Activated CD4-positive, alpha-beta T cell treated with anti-CD3 and anti-CD28 coated beads, Interleukin-2, amount 10 ng/mL, durations not matched to agents 7 days and 5 days (primary cell): ENCODE measurements at regions of chr1 and their contacts with region 1.

Region 1: GRCh38 chr1:185681034-185681633 is 53.1 kb upstream of the HMCN1 start:
- DNase-seq: peak; percentile 52
- H3K4me3 Mint-ChIP-seq: no peak overlapping the region
- H3K27ac Mint-ChIP-seq: no peak overlapping the region
- H3K4me1 Mint-ChIP-seq: peaks cover 25% of the 10 kb centered on the region
- H3K27me3 Mint-ChIP-seq: peaks cover 4% of the 10 kb centered on the region

Region 2: GRCh38 chr1:185360714-185361113 is 320.4 kb before region 1 on chr1:
- CTCF ChIA-PET with region 1: no interaction called
- POLR2A ChIA-PET with region 1: no interaction called
- DNase-seq: no peak
- H3K4me3 Mint-ChIP-seq: no peak overlapping the region
- H3K27ac Mint-ChIP-seq: no peak overlapping the region
- H3K4me1 Mint-ChIP-seq: peaks cover 4% of the 10 kb centered on the region
- H3K27me3 Mint-ChIP-seq: peaks cover 14% of the 10 kb centered on the region

Region 3: DNA sequence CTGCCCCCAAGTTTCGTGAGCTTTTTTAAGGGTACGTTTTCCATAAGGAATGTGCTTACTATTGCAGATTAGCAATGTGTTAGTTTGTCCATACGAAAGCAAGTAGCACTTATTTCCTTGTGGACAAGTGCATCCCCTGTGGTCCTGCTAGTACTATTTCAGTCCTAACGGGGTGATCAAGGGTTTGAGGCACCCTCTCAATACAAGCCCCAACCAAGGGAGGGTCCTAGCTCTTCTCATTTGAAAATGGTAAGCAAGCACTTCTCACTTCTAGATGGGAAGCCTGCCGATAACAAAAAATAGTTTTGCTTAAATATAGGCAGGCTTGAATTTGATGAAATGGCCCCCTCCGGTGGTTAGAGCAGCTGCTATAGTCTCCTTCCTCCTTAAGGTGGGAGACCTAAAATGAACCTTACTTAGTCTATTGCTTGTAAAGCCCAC is 10.9 kb before region 1 on chr1:
- CTCF ChIA-PET with region 1: interaction called, 17 read pairs
- POLR2A ChIA-PET with region 1: no interaction called
- DNase-seq: peak; percentile 61
- H3K4me3 Mint-ChIP-seq: no peak overlapping the region
- H3K27ac Mint-ChIP-seq: no peak overlapping the region
- H3K4me1 Mint-ChIP-seq: peaks cover 32% of the 10 kb centered on the region
- H3K27me3 Mint-ChIP-seq: no peaks in the 10 kb centered on the region

Region 4: GRCh38 chr1:185701650-185702049 is 20.5 kb after region 1 on chr1:
- CTCF ChIA-PET with region 1: no interaction called
- POLR2A ChIA-PET with region 1: no interaction called
- DNase-seq: no peak
- H3K4me3 Mint-ChIP-seq: no peak overlapping the region
- H3K27ac Mint-ChIP-seq: no peak overlapping the region
- H3K4me1 Mint-ChIP-seq: peaks cover 11% of the 10 kb centered on the region
- H3K27me3 Mint-ChIP-seq: peaks cover 21% of the 10 kb centered on the region